Activated B cell treated with CpG ODN at 0.5 μM for 24 hours (primary cell): ENCODE measurements at regions of chr5 and their contacts with region 1.

Region 1: DNA sequence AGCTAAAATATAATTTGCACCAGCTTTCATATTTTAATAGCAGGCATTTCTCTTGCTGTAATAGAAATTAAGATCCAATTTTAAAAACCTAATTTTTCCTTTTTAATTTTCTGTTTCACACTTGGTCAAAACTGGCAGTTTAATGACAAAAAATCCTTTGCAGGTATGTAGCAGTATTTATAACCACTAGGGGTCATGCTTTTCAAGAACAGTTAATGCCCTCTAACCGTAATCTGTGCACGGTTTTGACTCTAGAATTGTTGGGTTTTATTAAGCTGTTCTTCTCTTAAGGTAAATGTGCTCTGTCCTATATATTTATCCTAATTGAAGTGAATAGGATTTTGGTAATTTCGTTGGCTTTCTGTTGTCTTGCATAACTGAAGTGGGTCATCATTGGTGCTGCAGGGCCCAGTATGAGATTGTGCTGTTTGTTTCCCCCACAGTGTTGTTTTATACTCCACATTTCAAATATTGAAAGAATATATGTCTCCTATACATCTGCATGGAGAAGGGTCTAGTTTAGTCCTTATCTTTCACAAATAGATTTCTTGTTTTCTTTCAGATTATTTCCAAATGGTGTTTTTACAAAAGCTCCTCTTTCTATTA is 107.4 kb downstream of the SCAMP1 start:
- DNase-seq: no peak
- ATAC-seq: peak; percentile 49
- H3K4me3 Mint-ChIP-seq: no peak overlapping the region
- H3K27ac Mint-ChIP-seq: no peak overlapping the region
- H3K4me1 Mint-ChIP-seq: peaks cover 3% of the 10 kb centered on the region
- H3K27me3 Mint-ChIP-seq: no peaks in the 10 kb centered on the region
- CTCF ChIP-seq: peak; percentile 32

Region 2: DNA sequence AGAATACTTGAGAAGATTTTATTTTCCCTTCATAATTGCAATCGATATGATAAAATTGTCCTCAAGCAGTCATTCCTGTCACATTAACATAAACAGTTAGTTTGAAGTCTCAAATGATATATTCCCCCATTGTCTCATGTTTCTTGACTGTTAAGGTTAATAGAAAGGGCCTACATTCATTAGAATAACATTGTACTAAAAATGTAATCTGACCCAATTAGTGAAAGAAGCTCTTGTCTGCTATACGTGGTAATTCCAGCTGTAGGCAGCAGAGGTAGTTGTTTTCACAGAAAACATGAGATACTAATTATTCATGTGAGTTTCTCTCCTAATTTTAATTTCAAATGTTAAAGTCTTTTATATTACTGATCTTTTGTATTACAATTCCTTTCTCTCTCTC is 147.5 kb before region 1 on chr5:
- CTCF ChIA-PET with region 1: interaction called, 4 read pairs
- POLR2A ChIA-PET with region 1: no interaction called
- intact Hi-C with region 1: loop called (anchors 1 kb)
- DNase-seq: no peak
- ATAC-seq: no peak
- H3K4me3 Mint-ChIP-seq: no peak overlapping the region
- H3K27ac Mint-ChIP-seq: no peak overlapping the region
- H3K4me1 Mint-ChIP-seq: no peaks in the 10 kb centered on the region
- H3K27me3 Mint-ChIP-seq: no peaks in the 10 kb centered on the region
- CTCF ChIP-seq: no peak

Region 3: GRCh38 chr5:78648359-78649210 is 180.7 kb after region 1 on chr5 and contains the start of gene LHFPL2:
- CTCF ChIA-PET with region 1: no interaction called
- POLR2A ChIA-PET with region 1: no interaction called
- intact Hi-C with region 1: loop called (anchors 5 kb)
- DNase-seq: peak; percentile 63
- ATAC-seq: peak; percentile 69
- H3K4me3 Mint-ChIP-seq: peak within 1 kb of the TSS; percentile 83
- H3K27ac Mint-ChIP-seq: peak within 1 kb of the TSS; percentile 73
- H3K4me1 Mint-ChIP-seq: peaks cover 25% of the 10 kb centered on the region
- H3K27me3 Mint-ChIP-seq: no peaks in the 10 kb centered on the region
- CTCF ChIP-seq: no peak
- total RNA-seq, gene LHFPL2: 11.0 and 12.0 TPM in 2 replicates

Region 4: GRCh38 chr5:78964887-78965286 is 497.0 kb after region 1 on chr5:
- CTCF ChIA-PET with region 1: interaction called, 61 read pairs
- POLR2A ChIA-PET with region 1: no interaction called
- intact Hi-C with region 1: loop called (anchors 1 kb)
- DNase-seq: no peak
- ATAC-seq: peak; percentile 62
- H3K4me3 Mint-ChIP-seq: no peak overlapping the region
- H3K27ac Mint-ChIP-seq: no peak overlapping the region
- H3K4me1 Mint-ChIP-seq: peaks cover 3% of the 10 kb centered on the region
- H3K27me3 Mint-ChIP-seq: no peaks in the 10 kb centered on the region
- CTCF ChIP-seq: no peak

Region 5: GRCh38 chr5:79109527-79110492 is 642.0 kb after region 1 on chr5:
- CTCF ChIA-PET with region 1: no interaction called
- POLR2A ChIA-PET with region 1: no interaction called
- intact Hi-C with region 1: loop called (anchors 1 kb)
- DNase-seq: no peak
- ATAC-seq: peak; percentile 42
- H3K4me3 Mint-ChIP-seq: no peak overlapping the region
- H3K27ac Mint-ChIP-seq: no peak overlapping the region
- H3K4me1 Mint-ChIP-seq: no peaks in the 10 kb centered on the region
- H3K27me3 Mint-ChIP-seq: peaks cover 57% of the 10 kb centered on the region
- CTCF ChIP-seq: no peak

Region 6: DNA sequence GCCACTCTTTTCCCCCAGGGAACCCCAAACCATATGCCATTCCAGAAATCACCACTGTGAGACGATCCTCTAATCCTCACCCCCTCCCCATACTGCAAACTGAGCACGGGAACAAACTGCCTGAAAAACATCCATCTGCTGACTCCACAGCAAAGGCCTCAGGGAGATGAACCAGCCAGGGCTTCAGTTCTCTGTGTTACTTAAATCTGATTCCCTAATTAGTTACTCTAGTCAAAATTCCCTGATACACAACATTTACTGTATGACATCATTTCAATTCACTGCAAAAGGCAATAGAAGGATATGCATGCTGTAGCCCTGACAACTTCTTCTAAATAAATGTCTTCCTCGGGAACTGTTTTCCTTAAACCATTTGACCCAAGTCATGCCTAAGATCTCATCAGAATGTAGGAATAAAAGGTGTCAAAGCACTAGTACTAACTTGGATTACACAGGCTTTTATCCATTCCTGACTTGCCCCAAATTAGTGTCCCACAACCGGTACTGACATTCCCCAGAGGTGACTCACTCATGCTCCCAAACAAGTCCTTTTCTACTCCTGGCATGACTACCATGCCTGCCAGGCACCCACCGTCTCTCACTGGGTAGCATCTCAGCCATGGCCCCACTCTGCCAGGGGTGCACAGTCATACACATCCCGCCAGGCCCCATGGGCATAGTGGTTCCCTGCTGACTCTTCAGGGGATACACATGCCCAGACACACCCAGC is 1488.3 kb after region 1 on chr5:
- CTCF ChIA-PET with region 1: no interaction called
- POLR2A ChIA-PET with region 1: no interaction called
- intact Hi-C with region 1: no loop called
- DNase-seq: no peak
- ATAC-seq: no peak
- H3K4me3 Mint-ChIP-seq: no peak overlapping the region
- H3K27ac Mint-ChIP-seq: no peak overlapping the region
- H3K4me1 Mint-ChIP-seq: no peaks in the 10 kb centered on the region
- H3K27me3 Mint-ChIP-seq: peaks cover 9% of the 10 kb centered on the region
- CTCF ChIP-seq: no peak